Head of caudate nucleus (tissue), 42 donors: ENCODE measurements at regions of chr3 and their contacts with region 1.

Region 1: GRCh38 chr3:49786241-49786958 is at the start of gene IP6K1:
- DNase-seq: peak; percentile 100

Region 2: GRCh38 chr3:49723628-49724551 is 62.5 kb before region 1 on chr3 and contains the start of gene GMPPB:
- intact Hi-C with region 1: loop called (anchors 5 kb)
- DNase-seq: peak; percentile 93 to 99 (median 97)